HepG2 (cell line): ENCODE measurements at regions of chr17 and their contacts with region 1.

Region 1: GRCh38 chr17:9512323-9513168 is 63.1 kb downstream of the STX8 start:
- DNase-seq: no peak
- ATAC-seq: no peak
- H3K4me3 ChIP-seq: no peak overlapping the region
- H3K27ac ChIP-seq: no peak overlapping the region
- H3K4me1 ChIP-seq: no peaks in the 10 kb centered on the region
- H3K27me3 ChIP-seq: no peaks in the 10 kb centered on the region
- CTCF ChIP-seq: no peak
- EP300 ChIP-seq: no peak
- POLR2A ChIP-seq: no peak
- RAD21 ChIP-seq: no peak

Region 2: DNA sequence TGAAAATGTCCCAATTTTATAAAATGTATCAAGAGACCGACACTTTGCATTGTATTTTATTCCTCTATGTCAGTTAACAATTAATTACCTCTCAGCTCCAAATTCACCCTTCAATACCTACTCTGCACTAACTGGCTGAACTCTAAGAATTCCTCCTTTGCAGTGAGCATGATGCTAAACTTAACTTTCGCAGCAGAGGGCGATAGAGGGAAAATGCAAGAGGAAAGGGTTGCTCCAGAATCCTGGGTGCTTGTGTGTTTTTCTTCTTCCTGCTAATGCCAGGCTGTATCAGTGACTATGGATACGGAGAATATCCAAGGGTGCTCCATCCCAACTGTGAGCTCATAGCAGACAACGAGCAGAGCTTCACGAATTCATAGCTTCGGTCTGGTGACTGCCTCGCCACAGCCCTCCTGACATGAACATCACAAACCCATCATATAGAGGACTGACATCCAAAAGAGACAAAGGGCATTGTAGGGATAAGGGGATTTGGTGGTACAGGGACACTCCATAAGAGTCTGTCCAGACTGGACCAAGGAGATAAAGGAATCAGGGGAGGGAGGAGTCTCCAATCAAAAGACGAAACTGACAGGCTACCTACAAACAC is 109.9 kb before region 1 on chr17:
- CTCF ChIA-PET with region 1: no interaction called
- POLR2A ChIA-PET with region 1: no interaction called
- in situ Hi-C with region 1: loop called (anchors 10 kb)
- intact Hi-C with region 1: no loop called
- DNase-seq: peak; percentile 45
- ATAC-seq: peak; percentile 61; the same call in 2 of the 3 replicates
- H3K4me3 ChIP-seq: no peak overlapping the region
- H3K27ac ChIP-seq: no peak overlapping the region
- H3K4me1 ChIP-seq: no peaks in the 10 kb centered on the region
- H3K27me3 ChIP-seq: no peaks in the 10 kb centered on the region
- CTCF ChIP-seq: peak; percentile 69
- EP300 ChIP-seq: no peak
- POLR2A ChIP-seq: no peak
- RAD21 ChIP-seq: peak; percentile 28; the same call in 1 of the 2 replicates

Region 3: DNA sequence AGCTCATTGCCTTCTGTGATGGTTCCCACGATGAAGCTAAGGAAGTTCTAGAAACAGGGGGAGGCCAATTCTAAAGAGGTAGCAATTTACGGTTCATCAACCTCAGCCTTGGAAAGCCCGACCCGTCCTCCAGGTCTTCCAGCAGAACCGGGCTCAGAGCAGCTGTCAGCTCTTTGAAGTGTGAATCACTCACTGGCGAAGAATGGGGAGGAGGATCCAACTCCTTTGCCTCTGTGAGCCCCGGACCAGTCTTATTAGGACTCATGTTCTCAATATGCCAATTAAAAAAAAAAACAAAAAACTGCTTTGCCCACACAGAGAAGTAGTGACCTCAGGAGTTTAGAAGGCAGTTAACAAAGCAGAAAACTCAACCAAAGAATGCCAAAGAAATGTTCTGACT is 31.7 kb after region 1 on chr17:
- CTCF ChIA-PET with region 1: no interaction called
- POLR2A ChIA-PET with region 1: no interaction called
- in situ Hi-C with region 1: no loop called
- intact Hi-C with region 1: no loop called
- DNase-seq: no peak
- ATAC-seq: no peak
- H3K4me3 ChIP-seq: no peak overlapping the region
- H3K27ac ChIP-seq: no peak overlapping the region
- H3K4me1 ChIP-seq: no peaks in the 10 kb centered on the region
- H3K27me3 ChIP-seq: no peaks in the 10 kb centered on the region
- CTCF ChIP-seq: no peak
- EP300 ChIP-seq: no peak
- POLR2A ChIP-seq: no peak
- RAD21 ChIP-seq: no peak